ENCODE measurements at regions of chr13 and their contacts with region 1.

Region 1: DNA sequence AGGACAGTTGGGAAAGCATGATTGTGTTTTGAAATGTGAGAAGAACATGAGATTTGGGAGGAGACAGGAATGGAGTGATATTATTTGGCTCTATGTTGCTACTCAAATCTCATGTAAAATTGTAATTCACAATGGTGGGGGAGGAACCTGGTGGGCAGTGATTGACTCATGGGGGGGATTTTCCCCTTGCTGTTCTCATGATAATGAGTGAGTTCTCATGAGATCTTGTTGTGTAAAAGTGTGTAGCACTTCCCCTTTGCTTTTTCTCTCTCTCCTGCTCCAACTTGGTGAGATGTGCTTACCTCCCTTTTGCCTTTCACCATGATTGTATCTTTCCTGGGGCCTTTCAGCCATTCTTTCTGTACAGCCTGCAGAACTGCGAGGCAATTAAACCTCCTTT is 1261.0 kb upstream of the ATXN8OS start:
- DNase-seq: no peak
- H3K4me3 ChIP-seq: no peak overlapping the region
- H3K27ac ChIP-seq: no peak overlapping the region
- H3K4me1 ChIP-seq: no peaks in the 10 kb centered on the region
- H3K27me3 ChIP-seq: no peaks in the 10 kb centered on the region
- CTCF ChIP-seq: no peak
- POLR2A ChIP-seq: no peak

Region 2: DNA sequence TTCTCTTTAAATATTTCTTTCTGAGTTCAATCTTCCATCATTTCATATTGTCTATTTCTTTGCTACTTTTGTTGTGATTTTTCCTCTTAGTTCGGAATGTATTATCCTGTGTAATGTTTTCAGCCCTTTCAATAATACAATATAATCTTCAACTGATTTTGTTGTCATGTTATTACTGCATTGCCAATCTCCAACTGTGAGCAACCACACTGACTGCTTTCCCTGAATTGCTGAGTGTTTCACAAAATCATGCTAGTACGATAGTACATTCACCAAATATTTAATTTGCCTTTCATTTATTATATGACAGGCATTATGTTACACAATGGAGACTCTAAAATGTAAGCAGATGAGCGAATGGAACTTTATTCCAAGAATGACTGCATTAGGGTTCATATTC is 516.7 kb after region 1 on chr13:
- intact Hi-C with region 1: loop called (anchors 5 kb)
- DNase-seq: no peak
- H3K4me3 ChIP-seq: no peak overlapping the region
- H3K27ac ChIP-seq: no peak overlapping the region
- H3K4me1 ChIP-seq: no peaks in the 10 kb centered on the region
- H3K27me3 ChIP-seq: no peaks in the 10 kb centered on the region
- CTCF ChIP-seq: no peak
- POLR2A ChIP-seq: no peak